Colonic mucosa (tissue), 4 donors: ENCODE measurements at regions of chr10 and their contacts with region 1.

Region 1: DNA sequence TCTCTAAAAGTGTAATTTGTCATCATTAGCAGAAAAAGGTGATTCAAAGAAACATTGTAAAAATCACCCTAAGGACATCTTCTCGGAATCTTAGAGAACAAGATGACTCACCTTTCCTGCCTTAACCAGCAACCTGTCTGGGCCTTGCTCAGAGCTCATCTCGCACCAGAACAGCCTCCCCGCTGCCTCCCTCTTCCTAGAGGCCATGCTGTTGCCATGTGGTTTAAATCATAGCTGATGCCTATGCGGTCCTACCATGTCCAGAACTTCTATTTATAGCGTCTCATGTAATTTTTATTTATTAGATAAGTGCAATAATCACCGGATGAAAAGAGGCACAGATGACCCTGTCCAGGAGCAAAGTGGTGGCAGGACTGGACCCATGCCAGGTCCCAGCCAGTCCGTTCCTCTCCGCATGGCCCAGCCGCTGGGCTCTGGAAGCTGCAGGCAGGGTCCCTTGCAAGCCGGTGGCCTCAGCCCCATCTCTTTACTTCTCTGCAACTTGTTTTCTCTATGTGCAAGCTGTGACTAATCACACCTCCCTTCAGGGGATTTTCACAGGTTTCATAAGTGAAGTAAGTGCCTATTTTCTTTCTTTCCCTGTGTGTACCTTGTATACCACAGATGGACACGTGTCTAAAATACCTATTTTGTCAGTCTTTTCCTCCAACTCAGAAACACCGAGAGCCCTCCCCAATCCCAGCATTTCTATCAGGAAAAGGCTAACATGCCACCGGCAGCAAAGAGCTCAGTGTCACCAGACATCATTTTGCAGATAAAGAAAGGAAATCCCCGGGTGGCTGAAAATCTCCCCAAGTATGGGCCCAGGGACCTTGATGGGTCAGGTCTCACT is 27.1 kb downstream of the KLF6 start:
- DNase-seq: no peak
- H3K4me3 ChIP-seq: no peak overlapping the region
- H3K27ac ChIP-seq: peak overlapping the region; percentile 30
- H3K4me1 ChIP-seq: no peaks in the 10 kb centered on the region
- H3K27me3 ChIP-seq: no peaks in the 10 kb centered on the region
- CTCF ChIP-seq: no peak

Region 2: DNA sequence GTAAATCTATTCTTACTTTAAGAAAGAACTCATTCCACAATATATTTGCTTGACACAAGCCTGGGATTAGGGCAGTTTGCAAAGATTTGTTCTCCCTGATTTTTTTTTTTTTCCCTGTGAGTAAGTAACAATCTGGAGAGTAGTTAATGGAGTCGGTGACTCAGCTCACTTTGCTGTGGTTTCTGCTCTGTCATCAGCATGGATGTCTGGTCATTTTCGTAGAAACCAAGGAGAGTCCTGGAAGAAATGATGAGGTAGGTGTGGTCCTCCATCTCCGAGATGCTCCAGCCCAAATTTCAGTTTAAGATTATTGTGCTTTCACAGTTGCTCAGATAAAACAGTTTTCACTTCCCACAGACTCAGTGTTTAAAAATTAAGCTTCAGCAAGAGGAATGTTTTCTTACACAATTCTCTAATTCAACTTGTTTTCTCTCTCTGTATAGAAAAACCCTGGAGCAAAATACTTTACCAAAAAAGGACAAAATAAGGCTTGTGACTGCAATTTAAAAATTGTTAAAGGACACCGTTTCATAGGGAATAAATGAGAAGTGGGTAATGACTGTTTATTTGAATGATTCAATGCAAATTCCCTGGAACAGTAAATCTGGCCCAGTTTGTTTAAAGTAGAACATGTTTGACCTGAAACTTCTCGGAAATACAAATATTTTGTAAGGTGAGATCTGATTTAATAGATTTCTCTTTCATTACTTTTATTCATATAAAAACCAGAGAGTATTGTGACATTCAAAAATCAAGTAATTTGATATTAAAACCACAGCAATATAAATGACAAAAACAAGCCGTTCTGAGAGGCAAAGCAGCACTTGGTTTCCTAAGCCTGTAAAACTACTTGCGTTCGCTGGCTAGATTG is 508.7 kb before region 1 on chr10:
- intact Hi-C with region 1: loop called (anchors 10 kb)
- DNase-seq: no peak
- H3K4me3 ChIP-seq: no peak overlapping the region
- H3K27ac ChIP-seq: peak overlapping the region; percentile 22
- H3K4me1 ChIP-seq: no peaks in the 10 kb centered on the region
- H3K27me3 ChIP-seq: no peaks in the 10 kb centered on the region
- CTCF ChIP-seq: no peak